ENCODE measurements at regions of chr1 and their contacts with region 1.

Region 1: GRCh38 chr1:158638146-158638545 is 33.1 kb downstream of the OR10Z1 start:
- DNase-seq: no peak
- H3K4me3 ChIP-seq: no peak overlapping the region
- H3K27me3 ChIP-seq: no peaks in the 10 kb centered on the region
- CTCF ChIP-seq: no peak

Region 2: GRCh38 chr1:158611916-158612315 is 26.2 kb before region 1 on chr1:
- CTCF ChIA-PET with region 1: no interaction called
- POLR2A ChIA-PET with region 1: interaction called, 11 read pairs
- DNase-seq: no peak
- H3K4me3 ChIP-seq: no peak overlapping the region
- H3K27me3 ChIP-seq: no peaks in the 10 kb centered on the region
- CTCF ChIP-seq: no peak

Region 3: DNA sequence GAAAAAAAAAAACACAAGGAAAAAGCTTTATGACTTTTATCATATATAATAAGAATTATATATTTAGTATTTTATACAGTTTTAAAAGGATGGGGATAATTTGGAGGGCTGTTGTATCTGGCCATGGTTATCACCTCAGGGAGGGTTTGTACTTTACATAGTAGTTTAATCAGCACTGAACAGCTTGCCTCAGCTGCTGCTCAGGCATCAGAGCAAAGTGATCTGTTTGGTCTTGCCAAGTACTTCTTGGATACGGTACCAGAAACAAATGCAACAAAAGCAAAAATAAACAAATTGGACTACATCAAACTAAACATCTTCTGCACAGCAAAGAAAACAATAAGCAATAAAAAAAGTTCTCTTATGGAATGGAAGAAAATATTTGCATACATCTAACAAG is 51.0 kb after region 1 on chr1:
- CTCF ChIA-PET with region 1: no interaction called
- POLR2A ChIA-PET with region 1: no interaction called
- DNase-seq: no peak
- H3K4me3 ChIP-seq: no peak overlapping the region
- H3K27me3 ChIP-seq: no peaks in the 10 kb centered on the region
- CTCF ChIP-seq: no peak